ENCODE measurements at regions of chr12 and their contacts with region 1.

Region 1: DNA sequence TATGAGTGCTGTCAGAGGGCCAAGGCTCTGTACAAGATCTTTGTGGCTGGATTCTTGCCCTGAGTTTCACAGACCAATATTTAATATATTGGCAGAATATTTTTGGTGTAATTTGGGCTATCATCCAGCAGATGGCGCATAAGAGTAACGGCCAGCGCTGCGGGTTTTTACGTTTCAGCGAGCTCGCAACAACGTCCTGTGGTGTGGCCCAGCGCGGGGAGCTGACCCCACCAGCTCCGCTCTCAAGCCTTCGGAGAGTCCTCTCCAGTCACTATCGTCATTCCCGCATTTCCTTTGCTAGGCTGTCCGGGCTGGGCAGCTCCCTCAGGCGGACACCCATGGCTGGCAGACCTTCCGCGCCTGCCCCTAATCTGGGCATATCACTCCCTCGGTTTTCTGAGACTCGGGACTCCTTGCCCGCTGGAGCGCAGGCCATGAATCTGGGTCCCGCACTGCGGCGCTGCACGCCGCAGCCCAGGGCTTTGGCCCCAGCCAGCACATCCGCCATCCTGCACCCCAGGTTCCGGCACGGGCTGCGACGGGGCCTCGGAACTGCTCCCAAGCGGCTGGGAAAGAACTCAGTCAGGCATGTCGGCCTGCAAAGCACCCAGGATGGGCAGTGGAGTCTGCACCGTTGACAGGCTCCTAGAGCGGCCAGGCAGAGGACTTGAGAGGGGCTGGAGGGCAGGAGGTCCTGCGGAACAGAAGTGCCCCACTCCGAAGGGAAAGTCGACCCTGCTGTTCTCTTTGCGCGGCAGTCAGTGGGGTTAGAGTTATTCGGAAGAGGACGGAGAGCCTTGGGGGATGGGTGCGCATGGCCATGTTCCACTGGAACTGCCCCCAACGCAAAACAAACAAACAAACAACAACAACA is 18.4 kb downstream of the OLR1 start:
- DNase-seq: peak; percentile 58 to 92 (median 78)

Region 2: DNA sequence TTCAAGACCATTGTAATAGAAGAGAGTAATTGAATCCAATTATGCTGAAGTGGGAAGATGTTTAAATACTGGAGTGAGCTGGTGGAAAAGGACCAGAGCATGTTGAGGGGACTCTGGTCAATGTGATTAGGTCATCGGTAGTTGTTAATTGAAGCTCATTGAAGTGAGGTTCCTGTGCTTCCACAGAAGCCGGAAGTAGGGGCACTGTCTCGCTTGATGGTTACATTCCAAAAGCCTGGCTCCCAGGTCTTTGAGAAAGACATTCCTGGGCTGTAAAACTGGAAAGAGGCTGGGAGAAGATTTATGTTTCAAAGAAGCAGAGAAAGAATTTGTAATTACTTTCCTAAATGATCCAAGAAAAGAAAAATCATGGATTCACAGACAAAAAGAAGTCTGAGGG is 408.3 kb before region 1 on chr12:
- intact Hi-C with region 1: loop called (anchors 5 kb)
- DNase-seq: no peak

Region 3: DNA sequence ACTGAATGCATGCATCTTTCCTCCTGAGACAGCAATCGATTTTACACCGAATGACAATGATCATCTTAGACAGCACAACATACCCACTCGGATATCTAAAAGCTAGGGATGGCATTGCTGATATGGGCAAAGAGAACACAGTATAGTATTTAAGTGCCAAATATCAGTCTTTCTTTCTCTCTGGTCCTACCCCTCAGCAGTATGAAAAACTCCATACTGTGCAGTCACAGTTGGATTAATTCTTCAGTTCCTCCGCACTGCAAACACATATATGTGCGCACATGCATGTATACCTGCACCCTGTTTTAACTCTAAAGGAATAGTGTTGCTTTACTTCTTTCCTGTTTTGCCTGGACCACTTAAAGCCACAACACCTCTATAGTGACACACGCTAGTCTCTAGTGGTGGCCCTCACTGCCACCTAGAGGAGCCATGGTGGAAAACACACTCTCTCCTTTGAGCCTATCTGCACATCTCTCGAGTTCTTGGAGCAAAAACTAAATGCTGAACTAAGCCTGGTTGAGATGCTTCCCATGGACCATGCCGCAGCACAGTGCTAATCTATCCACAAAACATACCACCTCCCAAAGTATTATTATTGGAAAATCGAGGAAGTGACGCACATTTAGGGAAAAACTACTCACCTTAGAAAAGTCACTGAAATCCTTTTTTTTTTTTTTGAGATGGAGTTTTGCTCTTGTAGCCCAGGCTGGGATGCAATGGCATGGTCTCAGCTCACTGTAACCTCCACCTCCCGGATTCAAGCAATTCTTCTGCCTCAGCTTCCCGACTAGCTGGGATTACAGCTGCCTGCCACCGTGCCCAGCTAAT is 37.3 kb after region 1 on chr12:
- intact Hi-C with region 1: loop called (anchors 2 kb)
- DNase-seq: peak; percentile 30 to 88 (median 74)

Region 4: GRCh38 chr12:10285919-10286318 is 132.4 kb after region 1 on chr12:
- intact Hi-C with region 1: no loop called
- DNase-seq: no peak

Region 5: GRCh38 chr12:10873378-10873777 is 719.9 kb after region 1 on chr12:
- intact Hi-C with region 1: no loop called
- DNase-seq: no peak

Measured in head of caudate nucleus (tissue), 42 donors.